ENCODE measurements at regions of chr21 and their contacts with region 1.

Region 1: GRCh38 chr21:42833439-42833815 is 45.9 kb downstream of the WDR4 start:
- DNase-seq: peak; percentile 83
- H3K4me3 Mint-ChIP-seq: peak overlapping the region; percentile 25
- H3K27ac Mint-ChIP-seq: peak overlapping the region; percentile 47
- H3K4me1 Mint-ChIP-seq: peaks cover 33% of the 10 kb centered on the region
- H3K27me3 Mint-ChIP-seq: no peaks in the 10 kb centered on the region

Region 2: DNA sequence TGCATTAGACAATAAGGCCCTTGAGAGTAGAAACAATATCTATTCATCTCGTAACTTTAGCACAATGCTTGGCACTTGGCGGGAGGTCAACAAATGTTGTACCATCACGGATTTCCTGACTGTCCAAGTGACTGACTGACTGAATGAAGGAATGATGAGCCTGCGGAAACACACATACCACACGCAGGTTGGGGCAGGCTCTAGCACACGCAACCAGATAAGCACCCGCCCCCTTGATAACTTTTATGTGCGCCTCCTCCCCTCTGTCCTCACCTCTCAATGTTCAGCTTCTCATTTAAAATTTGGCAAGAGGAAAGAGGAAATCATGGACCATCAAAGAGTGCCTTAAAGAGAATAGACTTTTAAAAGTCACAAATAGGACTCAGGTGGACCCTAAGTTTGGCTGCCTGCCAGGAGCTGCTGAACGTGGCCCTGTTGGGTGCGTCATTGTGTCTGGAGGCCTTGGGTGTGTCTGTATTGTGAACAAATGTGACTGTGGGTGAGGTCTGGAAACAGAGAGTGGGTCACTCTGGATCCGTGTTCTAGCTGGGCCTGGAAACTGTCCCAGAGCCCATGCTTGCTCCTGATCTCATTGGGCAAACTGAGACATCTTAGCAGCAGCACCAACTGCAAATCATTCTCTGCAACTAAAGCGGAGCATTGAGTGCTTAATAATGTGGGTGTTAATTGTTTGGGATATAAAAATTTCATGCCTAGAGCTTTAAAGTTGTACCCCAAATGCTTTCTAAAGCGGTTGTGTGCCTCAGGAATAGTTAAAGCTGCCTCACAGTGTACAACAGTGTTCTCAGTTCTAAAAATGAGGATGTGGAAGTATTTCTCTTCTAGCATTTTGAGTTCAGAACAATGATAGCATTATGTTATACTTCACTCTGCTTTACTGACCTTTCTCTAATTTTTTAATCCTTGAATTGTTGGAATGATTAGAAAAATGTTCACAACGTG is 662.1 kb before region 1 on chr21:
- CTCF ChIA-PET with region 1: no interaction called
- intact Hi-C with region 1: no loop called
- DNase-seq: no peak
- H3K4me3 Mint-ChIP-seq: no peak overlapping the region
- H3K27ac Mint-ChIP-seq: no peak overlapping the region
- H3K4me1 Mint-ChIP-seq: peaks cover 5% of the 10 kb centered on the region
- H3K27me3 Mint-ChIP-seq: no peaks in the 10 kb centered on the region

Region 3: DNA sequence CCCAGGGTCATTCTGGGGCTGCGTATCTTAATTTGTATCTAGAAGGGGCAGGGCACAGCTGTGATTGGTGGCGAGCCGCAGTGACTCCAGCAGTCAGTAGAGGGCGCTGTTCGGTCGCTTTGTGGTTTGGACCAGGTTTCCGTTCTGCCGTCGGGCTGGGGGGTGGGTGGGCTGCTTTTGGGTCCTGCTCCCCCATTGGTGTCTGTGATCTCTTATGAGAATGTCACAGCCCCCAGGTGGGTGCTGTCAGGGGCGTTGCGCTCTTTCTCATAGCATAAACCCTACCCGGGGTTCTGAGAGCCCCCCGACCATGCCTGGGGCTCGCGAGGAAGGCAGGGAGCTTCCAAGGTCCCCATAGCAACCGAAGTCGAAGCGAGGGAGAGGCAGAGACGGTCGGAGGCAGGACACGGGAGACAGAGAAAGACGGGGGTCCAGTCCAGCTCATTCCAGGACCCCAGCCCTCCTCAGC is 523.6 kb before region 1 on chr21:
- CTCF ChIA-PET with region 1: no interaction called
- intact Hi-C with region 1: loop called (anchors 5 kb)
- DNase-seq: peak; percentile 86
- H3K4me3 Mint-ChIP-seq: no peak overlapping the region
- H3K27ac Mint-ChIP-seq: no peak overlapping the region
- H3K4me1 Mint-ChIP-seq: peaks cover 3% of the 10 kb centered on the region
- H3K27me3 Mint-ChIP-seq: peaks cover 2% of the 10 kb centered on the region

Region 4: GRCh38 chr21:42440187-42440792 is 393.1 kb before region 1 on chr21:
- CTCF ChIA-PET with region 1: no interaction called
- intact Hi-C with region 1: no loop called
- DNase-seq: no peak
- H3K4me3 Mint-ChIP-seq: no peak overlapping the region
- H3K27ac Mint-ChIP-seq: peak overlapping the region; percentile 46
- H3K4me1 Mint-ChIP-seq: peaks cover 31% of the 10 kb centered on the region
- H3K27me3 Mint-ChIP-seq: no peaks in the 10 kb centered on the region

Region 5: DNA sequence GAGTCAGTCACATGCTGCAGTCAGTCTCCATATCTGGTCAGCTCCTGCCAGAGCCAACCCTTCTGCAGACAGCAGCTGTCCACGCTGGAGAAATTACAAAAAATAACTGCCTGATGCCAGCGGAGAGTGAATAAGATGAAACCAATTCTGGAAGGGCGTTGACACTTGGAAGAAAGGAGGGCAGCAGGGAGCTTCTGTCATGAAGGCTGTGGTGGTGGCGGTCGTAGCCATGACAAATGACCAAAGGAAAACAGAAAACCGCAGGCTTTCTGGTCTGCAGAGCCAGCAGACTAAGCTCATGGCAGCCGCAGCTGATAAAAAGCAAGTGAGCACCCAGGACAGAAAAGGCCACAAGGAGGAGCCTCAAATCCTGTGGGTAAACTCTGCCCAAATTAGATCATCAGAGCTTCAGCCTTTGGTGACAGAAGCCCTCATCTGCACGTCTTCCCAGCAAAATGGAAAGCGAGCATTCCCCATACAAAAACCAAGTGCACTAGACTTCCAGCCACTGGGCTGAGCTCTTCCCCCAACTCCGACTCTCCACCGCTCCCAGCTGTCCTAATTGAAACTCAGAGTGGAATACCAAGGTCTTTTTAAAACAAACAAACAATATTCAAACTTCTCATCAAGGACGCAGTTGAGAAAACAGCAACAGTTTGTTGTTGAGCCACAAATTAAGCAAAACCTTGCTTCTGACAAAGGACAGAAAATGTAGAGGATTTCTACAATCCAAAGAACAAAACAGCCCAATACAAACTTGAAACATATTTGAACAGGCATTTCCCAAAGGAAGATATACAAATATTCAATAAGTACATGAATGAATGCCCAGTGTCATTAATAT is 366.1 kb before region 1 on chr21:
- CTCF ChIA-PET with region 1: no interaction called
- intact Hi-C with region 1: loop called (anchors 10 kb)
- DNase-seq: peak; percentile 35
- H3K4me3 Mint-ChIP-seq: no peak overlapping the region
- H3K27ac Mint-ChIP-seq: no peak overlapping the region
- H3K4me1 Mint-ChIP-seq: peaks cover 30% of the 10 kb centered on the region
- H3K27me3 Mint-ChIP-seq: no peaks in the 10 kb centered on the region

Region 6: GRCh38 chr21:42593007-42593806 is 240.2 kb before region 1 on chr21:
- CTCF ChIA-PET with region 1: interaction called, 4 read pairs
- intact Hi-C with region 1: loop called (anchors 5 kb)
- DNase-seq: peak; percentile 83
- H3K4me3 Mint-ChIP-seq: no peak overlapping the region
- H3K27ac Mint-ChIP-seq: no peak overlapping the region
- H3K4me1 Mint-ChIP-seq: peaks cover 11% of the 10 kb centered on the region
- H3K27me3 Mint-ChIP-seq: no peaks in the 10 kb centered on the region

Region 7: DNA sequence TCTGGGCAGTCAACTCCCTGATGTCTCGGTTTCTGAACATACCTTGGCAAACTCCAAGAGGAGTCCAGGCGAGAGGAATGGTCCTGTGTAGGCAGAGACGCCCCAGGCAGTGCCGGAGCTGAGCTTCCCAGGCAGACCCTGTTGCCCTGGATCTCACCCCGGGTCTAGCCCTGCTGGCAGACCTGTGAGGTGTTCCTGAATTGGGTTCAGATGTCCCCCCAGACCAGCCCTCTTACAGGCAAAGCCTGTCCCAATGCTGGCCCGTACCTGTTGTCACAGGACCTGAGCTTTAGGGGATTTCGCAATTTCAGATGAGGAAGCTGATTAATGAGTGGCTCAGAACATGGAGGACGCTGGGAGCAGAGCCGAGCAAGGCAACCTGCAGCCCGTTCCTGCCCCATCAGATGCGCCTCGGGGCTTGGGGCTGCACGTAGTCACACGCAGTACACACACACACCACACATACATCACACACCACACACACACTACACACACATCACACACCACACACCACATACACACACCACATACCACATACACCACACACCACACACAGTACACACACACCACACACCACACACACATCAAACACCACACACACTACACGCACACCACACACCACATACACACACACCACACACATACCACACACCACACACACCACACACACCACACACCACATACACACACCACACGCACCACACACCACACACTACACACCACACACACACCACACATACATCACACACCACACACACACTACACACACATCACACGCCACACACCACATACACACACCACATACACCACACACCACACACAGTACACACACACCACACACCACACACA is 218.4 kb before region 1 on chr21:
- CTCF ChIA-PET with region 1: no interaction called
- intact Hi-C with region 1: no loop called
- DNase-seq: peak; percentile 84
- H3K4me3 Mint-ChIP-seq: no peak overlapping the region
- H3K27ac Mint-ChIP-seq: no peak overlapping the region
- H3K4me1 Mint-ChIP-seq: peaks cover 6% of the 10 kb centered on the region
- H3K27me3 Mint-ChIP-seq: no peaks in the 10 kb centered on the region

Region 8: DNA sequence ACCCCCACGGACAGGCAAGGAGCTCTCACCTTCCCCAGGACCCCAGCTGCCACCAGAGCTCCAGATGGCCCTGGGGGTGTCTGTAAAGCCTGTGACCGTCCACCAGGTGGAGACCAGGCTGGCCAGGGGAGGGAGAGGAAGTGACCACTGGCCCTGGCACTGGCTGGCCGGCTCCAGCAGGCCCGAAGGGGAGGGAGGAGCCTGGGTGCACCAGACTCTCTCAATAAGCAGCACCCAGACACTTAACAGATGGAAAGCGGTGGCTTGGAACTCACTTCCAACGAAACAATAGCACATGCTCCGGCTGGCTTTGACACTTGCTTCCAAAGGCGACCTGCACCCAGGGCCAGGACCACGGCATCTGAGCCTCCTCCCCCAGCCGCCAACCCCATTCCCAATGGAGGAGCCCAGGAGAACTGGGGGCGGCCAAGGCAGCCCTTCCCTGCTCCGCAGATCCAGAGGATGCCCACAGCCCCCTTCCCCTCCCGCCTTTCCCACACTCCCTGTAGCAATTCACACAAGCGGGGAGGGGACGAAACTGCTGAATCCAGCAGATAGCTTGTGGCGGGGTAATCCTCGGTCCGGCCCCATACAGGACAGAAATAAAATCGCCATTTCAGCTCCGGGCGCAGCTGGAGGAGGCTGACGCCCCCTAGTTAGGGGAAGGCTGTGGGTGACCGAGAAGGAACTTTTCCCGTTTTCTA is 180.7 kb before region 1 on chr21:
- CTCF ChIA-PET with region 1: no interaction called
- intact Hi-C with region 1: loop called (anchors 1 kb)
- DNase-seq: no peak
- H3K4me3 Mint-ChIP-seq: peak overlapping the region; percentile 70
- H3K27ac Mint-ChIP-seq: no peak overlapping the region
- H3K4me1 Mint-ChIP-seq: peaks cover 20% of the 10 kb centered on the region
- H3K27me3 Mint-ChIP-seq: no peaks in the 10 kb centered on the region

Region 9: DNA sequence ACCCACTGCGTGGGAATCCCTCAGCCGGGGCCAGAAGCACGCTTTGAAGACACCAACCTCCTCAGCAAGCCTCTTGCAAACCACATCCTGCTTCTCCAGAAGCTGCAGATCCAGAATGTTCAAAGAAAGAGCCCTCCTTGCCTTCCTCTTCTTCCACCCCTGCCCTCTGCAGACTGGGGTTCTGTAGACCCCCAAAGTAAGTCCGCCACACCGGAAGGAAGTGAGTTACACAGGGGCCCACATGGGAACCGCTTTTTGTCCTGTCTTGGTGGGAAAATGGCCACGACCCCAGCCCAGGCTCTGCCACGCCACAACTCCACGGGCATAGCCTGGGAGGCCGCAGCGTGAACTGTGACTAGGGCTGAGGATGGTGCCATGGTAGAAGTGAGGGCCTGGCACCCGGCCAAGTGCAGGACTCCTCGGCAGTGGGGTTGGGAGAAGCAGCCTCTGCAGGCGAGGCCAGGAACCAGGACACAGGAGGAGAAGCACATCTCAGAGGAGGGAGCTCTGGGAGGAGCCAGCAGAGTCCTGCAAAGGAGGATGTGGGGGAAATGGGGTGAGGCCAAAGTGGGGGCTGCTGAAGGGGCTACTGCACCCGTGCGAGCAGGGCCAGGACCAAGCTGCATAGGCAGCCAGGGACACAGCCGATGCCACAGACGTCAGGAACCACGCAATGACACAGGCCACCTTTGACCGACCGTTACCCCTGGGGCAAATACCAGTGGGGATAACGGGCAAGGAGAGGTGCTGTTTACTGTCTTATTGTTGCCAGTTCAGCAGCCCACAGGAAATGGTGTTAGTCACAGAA is 149.1 kb before region 1 on chr21:
- CTCF ChIA-PET with region 1: no interaction called
- intact Hi-C with region 1: loop called (anchors 1 kb)
- DNase-seq: peak; percentile 74
- H3K4me3 Mint-ChIP-seq: peak overlapping the region; percentile 65
- H3K27ac Mint-ChIP-seq: peak overlapping the region; percentile 81
- H3K4me1 Mint-ChIP-seq: peaks cover 46% of the 10 kb centered on the region
- H3K27me3 Mint-ChIP-seq: no peaks in the 10 kb centered on the region

Region 10: GRCh38 chr21:42725416-42725930 is 108.0 kb before region 1 on chr21:
- CTCF ChIA-PET with region 1: no interaction called
- intact Hi-C with region 1: loop called (anchors 5 kb)
- DNase-seq: no peak
- H3K4me3 Mint-ChIP-seq: no peak overlapping the region
- H3K27ac Mint-ChIP-seq: no peak overlapping the region
- H3K4me1 Mint-ChIP-seq: peaks cover 2% of the 10 kb centered on the region
- H3K27me3 Mint-ChIP-seq: no peaks in the 10 kb centered on the region